Activated naive CD4-positive, alpha-beta T cell treated with anti-CD3 and anti-CD28 coated beads for 36 hours (primary cell): ENCODE measurements at regions of chr19 and their contacts with region 1.

Region 1: DNA sequence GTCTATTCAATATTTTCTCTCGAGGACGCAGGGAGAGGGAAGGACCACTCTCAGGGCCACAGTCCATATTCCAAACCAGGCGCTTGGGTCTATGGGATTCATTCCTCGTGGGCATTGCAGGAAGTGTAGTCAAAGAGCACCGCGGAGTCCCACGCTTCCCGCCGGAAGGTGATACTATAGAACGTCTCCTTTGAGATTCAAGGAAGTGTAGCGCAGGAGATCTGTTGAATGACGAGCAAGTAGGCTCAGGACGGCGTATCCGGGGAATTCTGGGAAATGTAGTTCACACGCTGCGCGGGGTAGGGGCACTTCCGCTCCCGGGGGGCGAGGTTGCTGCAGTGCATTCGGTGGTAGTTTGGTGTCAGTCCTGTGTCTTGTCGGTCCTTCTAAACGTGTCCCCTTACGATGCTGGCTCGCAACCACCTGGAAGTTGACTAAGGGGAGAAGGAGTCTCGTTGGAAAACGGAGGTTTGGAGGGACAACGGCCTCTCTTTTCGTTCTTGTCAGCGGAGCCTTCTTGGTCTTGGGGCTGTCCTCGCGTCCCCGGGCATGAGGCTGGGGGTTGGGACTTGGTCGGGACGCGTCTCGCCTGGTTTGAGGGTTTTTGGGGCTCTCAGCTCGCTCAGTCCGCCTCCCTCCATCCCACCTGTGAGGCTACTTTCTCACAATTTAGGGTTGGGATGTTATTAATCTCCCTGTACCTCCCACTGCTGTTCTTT is at the start of gene ZNF284:
- DNase-seq: peak; percentile 87
- H3K4me3 Mint-ChIP-seq: peak within 1 kb of the TSS; percentile 86
- H3K27ac Mint-ChIP-seq: peak within 1 kb of the TSS; percentile 13
- H3K4me1 Mint-ChIP-seq: peaks cover 19% of the 10 kb centered on the region
- H3K27me3 Mint-ChIP-seq: no peaks in the 10 kb centered on the region
- total RNA-seq, gene ZNF284: 0.76 to 0.86 TPM

Region 2: DNA sequence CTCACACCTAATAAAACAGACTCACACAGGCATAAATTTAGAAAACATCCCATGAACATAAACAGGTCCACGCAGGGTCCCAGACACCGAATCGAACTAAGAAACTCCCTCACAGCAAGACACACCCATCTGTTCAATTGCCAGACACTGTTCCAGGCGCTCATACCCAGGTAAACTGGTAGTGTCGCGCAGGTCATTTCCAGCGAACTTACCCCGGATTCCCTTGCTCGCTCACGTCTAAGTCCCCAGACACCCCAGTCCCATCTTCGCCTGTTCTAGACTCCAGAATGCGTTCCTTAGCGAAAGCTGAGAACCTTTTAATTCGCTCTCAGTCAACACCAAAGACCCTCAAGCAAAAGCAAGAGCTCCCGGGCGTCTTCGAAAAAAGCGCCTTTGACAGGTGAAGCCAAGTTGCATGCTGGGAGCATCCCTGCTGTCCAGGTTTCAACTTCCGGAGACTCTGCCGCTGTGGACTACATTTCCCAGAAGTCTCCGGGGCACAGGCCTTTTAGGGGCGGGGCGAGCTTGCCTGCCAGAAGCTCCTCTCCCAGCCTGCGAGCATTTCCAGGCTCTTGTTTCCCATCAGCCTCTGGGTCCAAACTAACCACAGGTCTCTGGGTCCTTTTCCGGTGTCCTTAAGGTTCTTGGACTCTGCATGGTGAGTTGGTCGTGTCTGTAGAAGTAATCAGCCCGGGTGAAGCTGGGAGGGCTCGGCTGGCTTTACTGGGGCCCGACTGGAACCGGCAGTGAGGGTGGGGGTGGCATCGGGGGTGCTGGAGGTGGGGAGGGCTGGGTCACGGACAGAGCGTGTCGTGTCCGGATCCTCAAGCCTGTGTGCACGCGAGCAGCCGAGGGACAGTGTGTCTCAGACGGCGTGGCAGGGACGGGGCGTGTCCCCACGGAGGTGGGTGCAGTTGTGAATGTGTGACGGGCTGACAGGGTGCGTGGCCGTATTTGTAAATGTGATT is 244.9 kb before region 1 on chr19 and contains the start of gene ZNF283:
- CTCF ChIA-PET with region 1: no interaction called
- intact Hi-C with region 1: loop called (anchors 2 kb)
- DNase-seq: peak; percentile 92
- H3K4me3 Mint-ChIP-seq: peak within 1 kb of the TSS; percentile 88
- H3K27ac Mint-ChIP-seq: peak within 1 kb of the TSS; percentile 75
- H3K4me1 Mint-ChIP-seq: peaks cover 17% of the 10 kb centered on the region
- H3K27me3 Mint-ChIP-seq: no peaks in the 10 kb centered on the region
- total RNA-seq, gene ZNF283: 6.8 to 7.7 TPM

Region 3: GRCh38 chr19:44051654-44052402 is 20.2 kb before region 1 on chr19 and contains the start of gene ZNF223:
- CTCF ChIA-PET with region 1: no interaction called
- intact Hi-C with region 1: loop called (anchors 1 kb)
- DNase-seq: peak; percentile 75
- H3K4me3 Mint-ChIP-seq: peak within 1 kb of the TSS; percentile 82
- H3K27ac Mint-ChIP-seq: peak within 1 kb of the TSS; percentile 73
- H3K4me1 Mint-ChIP-seq: peaks cover 18% of the 10 kb centered on the region
- H3K27me3 Mint-ChIP-seq: no peaks in the 10 kb centered on the region
- total RNA-seq, gene ZNF223: 0.48 to 0.96 TPM

Region 4: GRCh38 chr19:44113138-44113783 is 41.3 kb after region 1 on chr19 and contains the start of gene ZNF225:
- CTCF ChIA-PET with region 1: no interaction called
- intact Hi-C with region 1: loop called (anchors 1 kb)
- DNase-seq: peak; percentile 93
- H3K4me3 Mint-ChIP-seq: peak within 1 kb of the TSS; percentile 95
- H3K27ac Mint-ChIP-seq: peak within 1 kb of the TSS; percentile 78
- H3K4me1 Mint-ChIP-seq: peaks cover 16% of the 10 kb centered on the region
- H3K27me3 Mint-ChIP-seq: no peaks in the 10 kb centered on the region
- total RNA-seq, gene ZNF225: 2.1 to 2.2 TPM

Region 5: GRCh38 chr19:44190020-44190419 is 118.0 kb after region 1 on chr19:
- CTCF ChIA-PET with region 1: no interaction called
- intact Hi-C with region 1: no loop called
- DNase-seq: no peak
- H3K4me3 Mint-ChIP-seq: no peak overlapping the region
- H3K27ac Mint-ChIP-seq: no peak overlapping the region
- H3K4me1 Mint-ChIP-seq: no peaks in the 10 kb centered on the region
- H3K27me3 Mint-ChIP-seq: no peaks in the 10 kb centered on the region

Region 6: GRCh38 chr19:44212250-44212865 is 140.4 kb after region 1 on chr19 and contains the start of gene ZNF227:
- CTCF ChIA-PET with region 1: no interaction called
- intact Hi-C with region 1: loop called (anchors 1 kb)
- DNase-seq: peak; percentile 89
- H3K4me3 Mint-ChIP-seq: peak within 1 kb of the TSS; percentile 88
- H3K27ac Mint-ChIP-seq: peak within 1 kb of the TSS; percentile 89
- H3K4me1 Mint-ChIP-seq: peaks cover 17% of the 10 kb centered on the region
- H3K27me3 Mint-ChIP-seq: no peaks in the 10 kb centered on the region
- total RNA-seq, gene ZNF227: 17.9 to 19.4 TPM